ENCODE measurements at regions of chr5 and their contacts with region 1.

Region 1: DNA sequence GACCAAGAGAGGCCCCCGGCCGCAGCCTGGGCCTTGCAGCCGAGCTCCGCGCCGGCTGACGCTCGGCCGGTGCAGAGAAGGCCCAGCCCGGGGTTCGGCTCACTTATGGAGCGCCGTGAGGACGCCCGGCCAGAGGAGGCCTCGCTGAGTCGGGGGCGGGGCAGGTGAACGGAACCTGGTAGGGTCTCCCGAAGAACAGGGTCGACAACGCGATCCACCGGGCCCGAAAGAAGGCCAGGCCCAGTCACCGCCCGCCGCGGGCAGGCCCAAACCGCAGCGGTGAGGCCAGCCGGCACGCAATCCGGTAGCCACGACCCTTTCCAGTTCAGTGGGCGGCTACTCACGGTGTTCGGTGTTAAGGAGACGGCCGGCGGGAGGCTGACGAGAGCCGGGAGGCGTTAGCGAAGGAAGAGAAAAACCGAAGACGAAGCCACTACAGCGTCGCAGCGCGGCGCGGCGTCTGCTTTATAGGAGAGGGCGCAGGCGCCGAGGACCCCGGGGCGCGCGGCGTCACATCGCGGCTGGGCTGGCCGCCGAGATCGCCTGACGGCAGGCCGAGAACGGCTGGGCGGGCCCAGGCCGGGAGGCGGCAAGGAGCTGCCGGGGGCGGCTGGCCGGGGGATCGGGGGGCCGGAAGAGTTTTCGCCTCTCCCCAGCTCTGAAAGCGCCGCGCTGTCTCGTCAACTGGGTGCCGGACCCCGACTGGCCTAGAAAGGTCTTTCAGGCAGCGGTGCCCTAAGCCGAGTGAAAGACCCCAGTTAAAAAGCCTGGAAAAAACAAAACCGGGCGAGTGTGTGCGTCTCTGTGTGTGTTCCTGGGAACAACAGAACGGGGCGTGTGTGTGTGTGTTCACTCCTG is at the start of gene SKP1:
- DNase-seq: peak; percentile 91
- ATAC-seq: peak; percentile 86
- H3K4me3 Mint-ChIP-seq: peak within 1 kb of the TSS; percentile 93
- H3K27ac Mint-ChIP-seq: peak within 1 kb of the TSS; percentile 96
- H3K4me1 Mint-ChIP-seq: peaks cover 26% of the 10 kb centered on the region
- H3K27me3 Mint-ChIP-seq: no peaks in the 10 kb centered on the region
- CTCF ChIP-seq: no peak
- total RNA-seq, gene SKP1: 193 and 211 TPM in 2 replicates

Region 2: GRCh38 chr5:134091626-134092121 is 85.1 kb before region 1 on chr5:
- CTCF ChIA-PET with region 1: no interaction called
- POLR2A ChIA-PET with region 1: interaction called, 11 read pairs
- intact Hi-C with region 1: no loop called
- DNase-seq: no peak
- ATAC-seq: no peak
- H3K4me3 Mint-ChIP-seq: no peak overlapping the region
- H3K27ac Mint-ChIP-seq: no peak overlapping the region
- H3K4me1 Mint-ChIP-seq: peaks cover 22% of the 10 kb centered on the region
- H3K27me3 Mint-ChIP-seq: no peaks in the 10 kb centered on the region
- CTCF ChIP-seq: no peak

Region 3: DNA sequence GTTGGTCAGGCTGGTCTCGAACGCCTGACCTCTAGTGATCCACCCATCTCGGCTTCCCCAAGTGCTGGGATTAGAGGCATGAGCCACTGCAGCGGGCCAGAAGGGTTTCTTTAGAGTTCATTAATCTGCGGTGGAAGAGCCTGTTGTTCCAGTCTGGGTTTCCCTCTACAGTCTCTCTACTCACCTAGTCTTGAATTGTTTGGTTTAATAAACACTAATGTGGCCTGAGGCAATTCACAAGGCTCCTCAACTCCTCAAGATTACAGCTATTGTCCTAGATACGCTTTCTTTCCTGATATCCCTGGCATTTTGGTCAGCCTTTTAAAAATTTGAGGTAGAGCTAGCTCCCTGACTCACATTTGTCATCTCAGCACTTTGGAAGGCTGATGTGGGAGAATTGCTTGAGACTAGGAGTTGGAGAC is 460.4 kb after region 1 on chr5:
- CTCF ChIA-PET with region 1: no interaction called
- POLR2A ChIA-PET with region 1: no interaction called
- intact Hi-C with region 1: loop called (anchors 1 kb)
- DNase-seq: no peak
- ATAC-seq: no peak
- H3K4me3 Mint-ChIP-seq: no peak overlapping the region
- H3K27ac Mint-ChIP-seq: no peak overlapping the region
- H3K4me1 Mint-ChIP-seq: peaks cover 2% of the 10 kb centered on the region
- H3K27me3 Mint-ChIP-seq: no peaks in the 10 kb centered on the region
- CTCF ChIP-seq: no peak

Region 4: GRCh38 chr5:134648425-134649162 is 471.9 kb after region 1 on chr5 and contains the start of gene SEC24A:
- CTCF ChIA-PET with region 1: no interaction called
- POLR2A ChIA-PET with region 1: interaction called, 5 read pairs
- intact Hi-C with region 1: loop called (anchors 1 kb)
- DNase-seq: peak; percentile 86
- ATAC-seq: peak; percentile 77
- H3K4me3 Mint-ChIP-seq: peak within 1 kb of the TSS; percentile 91
- H3K27ac Mint-ChIP-seq: peak within 1 kb of the TSS; percentile 96
- H3K4me1 Mint-ChIP-seq: peaks cover 22% of the 10 kb centered on the region
- H3K27me3 Mint-ChIP-seq: no peaks in the 10 kb centered on the region
- CTCF ChIP-seq: no peak
- total RNA-seq, gene SEC24A: 13.8 and 15.6 TPM in 2 replicates

Region 5: DNA sequence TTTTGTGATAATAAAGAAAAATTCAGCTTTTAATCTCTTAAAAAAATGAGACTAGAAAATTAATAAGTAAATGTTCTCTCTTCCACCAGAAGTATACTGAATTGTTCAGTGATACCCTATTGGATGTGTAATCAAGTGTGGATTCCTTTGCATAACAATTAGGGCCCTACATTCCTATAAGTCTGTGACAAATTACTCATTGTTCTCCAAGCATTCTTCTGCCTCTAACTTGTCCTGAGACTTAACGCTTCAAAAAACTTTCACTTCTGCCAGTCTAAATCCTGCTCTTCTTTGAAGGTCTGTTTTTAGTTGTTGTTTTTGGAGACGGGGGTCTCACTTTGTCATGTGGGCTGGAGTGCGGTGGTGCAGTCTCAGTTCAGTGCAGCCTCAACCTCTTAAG is 572.7 kb after region 1 on chr5:
- CTCF ChIA-PET with region 1: no interaction called
- POLR2A ChIA-PET with region 1: no interaction called
- intact Hi-C with region 1: no loop called
- DNase-seq: no peak
- ATAC-seq: no peak
- H3K4me3 Mint-ChIP-seq: no peak overlapping the region
- H3K27ac Mint-ChIP-seq: peak overlapping the region; percentile 59
- H3K4me1 Mint-ChIP-seq: peaks cover 8% of the 10 kb centered on the region
- H3K27me3 Mint-ChIP-seq: no peaks in the 10 kb centered on the region
- CTCF ChIP-seq: no peak

Measured in activated B cell treated with CpG ODN at 0.5 μM for 24 hours (primary cell).